ENCODE measurements at regions of chr2 and their contacts with region 1.

Region 1: GRCh38 chr2:163834221-163834620 is 98.4 kb upstream of the FIGN start:
- DNase-seq: no peak
- H3K4me3 ChIP-seq: no peak overlapping the region
- H3K27ac ChIP-seq: no peak overlapping the region
- H3K4me1 ChIP-seq: no peaks in the 10 kb centered on the region
- H3K27me3 ChIP-seq: no peaks in the 10 kb centered on the region
- CTCF ChIP-seq: no peak
- POLR2A ChIP-seq: no peak

Region 2: GRCh38 chr2:163794635-163795034 is 39.6 kb before region 1 on chr2:
- intact Hi-C with region 1: no loop called
- DNase-seq: peak in 1 of 2 donors; percentile 21
- H3K4me3 ChIP-seq: no peak overlapping the region
- H3K27ac ChIP-seq: no peak overlapping the region
- H3K4me1 ChIP-seq: no peaks in the 10 kb centered on the region
- H3K27me3 ChIP-seq: no peaks in the 10 kb centered on the region
- CTCF ChIP-seq: no peak
- POLR2A ChIP-seq: no peak

Region 3: GRCh38 chr2:164252568-164253287 is 418.5 kb after region 1 on chr2:
- intact Hi-C with region 1: no loop called
- DNase-seq: no peak
- H3K4me3 ChIP-seq: no peak overlapping the region
- H3K27ac ChIP-seq: no peak overlapping the region
- H3K4me1 ChIP-seq: no peaks in the 10 kb centered on the region
- H3K27me3 ChIP-seq: no peaks in the 10 kb centered on the region
- CTCF ChIP-seq: no peak
- POLR2A ChIP-seq: no peak

Region 4: DNA sequence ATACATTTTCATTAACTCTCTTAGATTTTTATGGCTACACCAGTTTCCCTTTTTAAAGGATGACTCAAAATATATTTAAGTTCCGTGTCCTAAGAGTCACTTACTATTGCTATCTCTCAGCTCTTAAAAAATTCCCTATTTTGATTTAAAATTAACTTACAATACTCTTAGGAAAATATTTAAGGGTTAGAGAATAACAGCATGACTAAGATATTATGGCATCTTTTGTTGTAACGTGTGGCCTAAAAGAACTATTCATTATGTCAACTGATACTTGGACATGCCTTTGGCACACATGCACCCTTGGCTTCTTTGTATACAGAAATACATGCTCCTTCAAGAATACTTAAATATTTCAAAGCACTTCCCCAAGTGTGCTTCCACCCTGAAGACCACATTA is 1327.3 kb after region 1 on chr2:
- intact Hi-C with region 1: loop called (anchors 10 kb)
- DNase-seq: no peak
- H3K4me3 ChIP-seq: no peak overlapping the region
- H3K27ac ChIP-seq: no peak overlapping the region
- H3K4me1 ChIP-seq: no peaks in the 10 kb centered on the region
- H3K27me3 ChIP-seq: no peaks in the 10 kb centered on the region
- CTCF ChIP-seq: no peak
- POLR2A ChIP-seq: no peak

Measured in breast epithelium (tissue), 4 donors.